ENCODE measurements at regions of chr5 and their contacts with region 1.

Region 1: DNA sequence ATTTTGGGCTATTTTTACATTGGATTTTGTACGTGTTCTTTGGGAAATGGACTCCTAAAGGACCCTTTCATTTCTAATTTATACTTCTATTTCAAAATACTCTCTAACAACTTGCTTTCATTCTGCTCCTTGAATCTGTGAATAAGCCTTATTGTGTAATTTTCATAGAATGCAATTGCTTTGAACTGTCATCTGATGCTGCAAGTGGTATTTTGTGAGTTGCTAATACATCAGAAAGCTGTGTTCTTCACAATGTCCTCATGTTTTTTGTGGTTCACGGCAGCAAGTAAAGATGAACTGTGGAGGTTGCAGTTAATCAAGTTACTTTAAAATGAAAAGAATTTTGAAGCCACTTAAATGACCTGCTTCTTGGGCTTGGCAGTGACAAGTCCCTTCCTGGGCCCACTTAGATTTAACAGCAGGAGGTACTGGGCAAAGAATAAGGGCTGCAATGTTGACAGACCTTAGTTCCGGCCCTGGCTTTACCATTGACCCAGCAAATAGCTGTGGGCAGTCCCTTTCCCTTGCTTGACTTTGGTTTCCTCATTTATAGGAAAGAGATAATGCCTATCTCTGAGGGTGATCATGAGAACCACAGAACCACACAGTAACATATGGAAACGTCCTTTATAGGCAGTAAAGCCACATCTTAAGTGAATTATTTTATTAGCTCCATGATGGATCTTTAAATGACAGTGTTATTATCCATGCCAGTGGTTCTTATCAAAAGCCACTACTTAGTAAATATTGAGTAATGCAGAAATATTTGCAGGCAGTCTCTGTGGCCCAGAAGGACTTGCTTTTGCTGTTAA is 54.8 kb downstream of the IQGAP2 start:
- DNase-seq: peak in 1 of 2 experiments; percentile 46
- H3K4me3 ChIP-seq: no peak overlapping the region
- H3K4me3 Mint-ChIP-seq: no peak overlapping the region
- H3K27ac Mint-ChIP-seq: peak overlapping the region; percentile 72
- H3K4me1 ChIP-seq: peaks cover 46% of the 10 kb centered on the region
- H3K4me1 Mint-ChIP-seq: peaks cover 33% of the 10 kb centered on the region
- H3K27me3 ChIP-seq: no peaks in the 10 kb centered on the region
- H3K27me3 Mint-ChIP-seq: no peaks in the 10 kb centered on the region
- CTCF ChIP-seq: no peak

Region 2: DNA sequence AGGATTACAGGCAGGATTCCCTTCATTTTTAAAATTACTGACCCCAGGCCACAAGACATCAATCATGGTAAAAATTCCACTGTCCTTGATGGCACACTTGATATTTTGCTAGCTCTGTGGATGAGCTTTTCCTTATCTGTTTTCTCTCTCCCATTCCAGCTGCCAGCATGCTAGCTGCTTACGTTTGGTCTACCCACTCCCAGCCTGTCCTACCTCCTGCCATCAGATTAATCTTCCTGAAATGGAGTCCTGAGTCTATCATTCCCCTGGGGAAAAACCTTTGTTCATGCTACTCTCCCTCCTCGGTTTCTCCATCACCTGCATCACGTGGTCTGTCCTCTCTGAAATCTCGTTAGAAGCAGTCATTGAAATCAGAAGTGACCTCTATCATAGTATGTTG is 56.4 kb after region 1 on chr5:
- CTCF ChIA-PET with region 1: no interaction called
- POLR2A ChIA-PET with region 1: no interaction called
- intact Hi-C with region 1: loop called (anchors 1 kb)
- DNase-seq: peak; percentile 56 to 81
- H3K4me3 ChIP-seq: no peak overlapping the region
- H3K4me3 Mint-ChIP-seq: peak overlapping the region; percentile 18
- H3K27ac Mint-ChIP-seq: peak overlapping the region; percentile 58
- H3K4me1 ChIP-seq: peaks cover 67% of the 10 kb centered on the region
- H3K4me1 Mint-ChIP-seq: peaks cover 20% of the 10 kb centered on the region
- H3K27me3 ChIP-seq: no peaks in the 10 kb centered on the region
- H3K27me3 Mint-ChIP-seq: no peaks in the 10 kb centered on the region
- CTCF ChIP-seq: no peak

Region 3: DNA sequence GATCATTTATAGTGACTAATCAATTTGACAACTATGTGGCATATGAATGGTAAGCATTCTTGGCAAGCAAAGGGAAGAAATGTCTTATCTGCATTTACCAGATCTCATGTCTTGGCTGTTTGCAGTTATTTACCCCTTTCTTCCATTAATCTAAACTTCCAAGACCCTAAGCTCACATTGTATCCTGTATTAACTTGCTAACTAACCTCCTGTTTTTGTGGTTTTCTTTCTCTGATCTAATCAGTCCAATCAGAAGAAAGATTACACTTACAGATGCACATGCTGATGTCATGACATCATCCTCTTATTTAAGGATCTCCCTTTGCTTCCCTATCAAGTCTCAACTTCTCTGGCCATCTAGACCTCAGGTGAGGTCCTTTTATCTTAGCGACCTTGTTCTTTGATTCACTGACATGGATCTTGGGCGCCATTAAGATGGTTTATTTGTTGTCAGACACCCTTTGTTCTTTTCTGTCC is 69.8 kb after region 1 on chr5:
- CTCF ChIA-PET with region 1: no interaction called
- POLR2A ChIA-PET with region 1: no interaction called
- intact Hi-C with region 1: no loop called
- DNase-seq: peak; percentile 74 to 75
- H3K4me3 ChIP-seq: no peak overlapping the region
- H3K4me3 Mint-ChIP-seq: peak overlapping the region; percentile 7
- H3K27ac Mint-ChIP-seq: peak overlapping the region; percentile 77
- H3K4me1 ChIP-seq: peaks cover 88% of the 10 kb centered on the region
- H3K4me1 Mint-ChIP-seq: peaks cover 31% of the 10 kb centered on the region
- H3K27me3 ChIP-seq: no peaks in the 10 kb centered on the region
- H3K27me3 Mint-ChIP-seq: no peaks in the 10 kb centered on the region
- CTCF ChIP-seq: no peak

Measured in Caco-2 (cell line).